T-cell (primary cell): ENCODE measurements at regions of chr19 and their contacts with region 1.

Region 1: DNA sequence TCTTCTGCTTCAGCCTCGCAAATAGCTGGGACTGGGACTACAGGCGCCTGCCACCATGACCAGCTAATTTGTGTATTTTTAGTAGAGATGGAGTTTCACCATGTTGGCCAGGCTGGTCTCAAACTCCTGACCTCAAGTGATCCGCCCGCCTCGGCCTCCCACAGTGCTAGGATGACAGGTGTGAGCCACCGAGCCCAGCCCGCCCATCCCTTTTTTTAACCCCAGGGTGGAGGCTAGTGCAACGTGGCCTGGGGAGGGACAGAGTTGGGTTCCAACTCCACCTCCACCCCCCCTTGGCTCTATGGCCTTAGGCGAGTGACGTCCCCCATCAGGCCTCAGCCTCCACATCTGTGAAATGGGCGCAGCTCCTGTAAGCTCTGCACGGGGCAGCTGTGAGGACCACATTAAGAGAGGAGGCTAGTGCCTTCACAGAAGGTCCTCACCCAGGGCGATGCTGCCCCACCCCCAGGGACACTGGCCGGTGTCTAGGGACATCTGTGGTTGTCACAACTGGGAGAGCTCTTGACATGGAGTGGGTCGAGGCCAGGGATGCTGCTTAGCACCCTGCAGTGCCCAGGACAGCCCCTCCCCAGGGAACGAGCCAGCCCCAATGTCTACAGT is 37.7 kb downstream of the SMIM24 start:
- DNase-seq: no peak
- ATAC-seq: no peak
- H3K4me3 ChIP-seq: no peak overlapping the region
- H3K4me3 Mint-ChIP-seq: no peak overlapping the region
- H3K27ac ChIP-seq: no peak overlapping the region
- H3K27ac Mint-ChIP-seq: no peak overlapping the region
- H3K4me1 ChIP-seq: peaks cover 2 to 4% of the 10 kb centered on the region in 2 experiments
- H3K4me1 Mint-ChIP-seq: peaks cover 6 to 14% (median 8%) of the 10 kb centered on the region in 3 donors
- H3K27me3 ChIP-seq: no peaks in the 10 kb centered on the region
- H3K27me3 Mint-ChIP-seq: no peaks in the 10 kb centered on the region

Region 2: GRCh38 chr19:3027292-3027691 is 415.3 kb before region 1 on chr19:
- CTCF ChIA-PET with region 1: interaction called in 1 of 2 experiments, 10 read pairs
- POLR2A ChIA-PET with region 1: no interaction called
- DNase-seq: no peak
- ATAC-seq: no peak
- H3K4me3 ChIP-seq: no peak overlapping the region
- H3K4me3 Mint-ChIP-seq: peak overlapping the region; percentile 46 to 74 (median 59)
- H3K27ac ChIP-seq: no peak overlapping the region
- H3K27ac Mint-ChIP-seq: peak overlapping the region in 1 of 2 donors; percentile 5
- H3K4me1 ChIP-seq: peaks cover 15 to 40% of the 10 kb centered on the region in 2 experiments
- H3K4me1 Mint-ChIP-seq: peaks cover 34 to 41% (median 35%) of the 10 kb centered on the region in 3 donors
- H3K27me3 ChIP-seq: peaks cover 0 to 29% of the 10 kb centered on the region in 2 experiments
- H3K27me3 Mint-ChIP-seq: peaks cover 0 to 8% of the 10 kb centered on the region in 2 donors

Region 3: DNA sequence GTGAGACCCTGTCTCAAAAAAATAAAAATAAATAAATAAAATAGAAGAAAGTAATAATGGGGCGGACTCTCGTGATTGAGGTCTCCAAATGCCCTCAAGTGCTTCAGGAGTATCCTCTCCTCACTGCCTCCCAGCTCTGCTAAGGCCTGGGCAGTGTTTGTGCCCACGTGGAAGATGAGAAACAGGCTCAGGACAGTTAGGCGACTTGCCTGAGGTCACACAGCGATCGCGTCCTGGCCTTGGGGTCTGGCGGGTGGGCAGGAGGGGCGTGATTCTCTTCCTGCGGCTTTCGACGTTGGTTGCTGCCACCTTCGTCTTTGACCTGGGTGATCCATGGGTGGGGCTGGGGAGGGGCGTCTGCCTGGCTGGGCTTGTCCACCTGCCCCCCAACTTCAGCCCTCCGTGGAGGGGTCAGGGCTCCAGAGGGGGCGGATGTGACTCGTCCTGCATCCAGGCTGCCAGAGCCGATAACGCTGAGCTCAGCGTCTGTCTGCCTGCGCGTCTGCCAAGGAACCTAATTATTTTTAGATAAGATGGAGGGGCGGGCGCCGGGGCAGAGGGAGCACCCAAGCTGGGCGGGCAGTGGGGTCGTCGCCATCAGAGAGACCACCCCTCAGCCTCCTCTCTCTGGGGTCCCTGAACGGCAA is 19.3 kb before region 1 on chr19:
- CTCF ChIA-PET with region 1: no interaction called
- POLR2A ChIA-PET with region 1: no interaction called
- DNase-seq: no peak
- ATAC-seq: no peak
- H3K4me3 ChIP-seq: no peak overlapping the region
- H3K4me3 Mint-ChIP-seq: no peak overlapping the region
- H3K27ac ChIP-seq: no peak overlapping the region
- H3K27ac Mint-ChIP-seq: no peak overlapping the region
- H3K4me1 ChIP-seq: no peaks in the 10 kb centered on the region
- H3K4me1 Mint-ChIP-seq: peaks cover 1 to 5% (median 2%) of the 10 kb centered on the region in 3 donors
- H3K27me3 ChIP-seq: no peaks in the 10 kb centered on the region
- H3K27me3 Mint-ChIP-seq: no peaks in the 10 kb centered on the region

Region 4: GRCh38 chr19:3642987-3643673 is 200.5 kb after region 1 on chr19:
- CTCF ChIA-PET with region 1: no interaction called
- POLR2A ChIA-PET with region 1: no interaction called
- DNase-seq: peak in 2 of 35 experiments; percentile 5 to 15
- ATAC-seq: peak in 2 of 4 experiments; percentile 12 to 29
- H3K4me3 ChIP-seq: no peak overlapping the region
- H3K4me3 Mint-ChIP-seq: no peak overlapping the region
- H3K27ac ChIP-seq: no peak overlapping the region
- H3K27ac Mint-ChIP-seq: no peak overlapping the region
- H3K4me1 ChIP-seq: no peaks in the 10 kb centered on the region
- H3K4me1 Mint-ChIP-seq: no peaks in the 10 kb centered on the region
- H3K27me3 ChIP-seq: no peaks in the 10 kb centered on the region
- H3K27me3 Mint-ChIP-seq: no peaks in the 10 kb centered on the region